ENCODE measurements at regions of chr6 and their contacts with region 1.

Region 1: DNA sequence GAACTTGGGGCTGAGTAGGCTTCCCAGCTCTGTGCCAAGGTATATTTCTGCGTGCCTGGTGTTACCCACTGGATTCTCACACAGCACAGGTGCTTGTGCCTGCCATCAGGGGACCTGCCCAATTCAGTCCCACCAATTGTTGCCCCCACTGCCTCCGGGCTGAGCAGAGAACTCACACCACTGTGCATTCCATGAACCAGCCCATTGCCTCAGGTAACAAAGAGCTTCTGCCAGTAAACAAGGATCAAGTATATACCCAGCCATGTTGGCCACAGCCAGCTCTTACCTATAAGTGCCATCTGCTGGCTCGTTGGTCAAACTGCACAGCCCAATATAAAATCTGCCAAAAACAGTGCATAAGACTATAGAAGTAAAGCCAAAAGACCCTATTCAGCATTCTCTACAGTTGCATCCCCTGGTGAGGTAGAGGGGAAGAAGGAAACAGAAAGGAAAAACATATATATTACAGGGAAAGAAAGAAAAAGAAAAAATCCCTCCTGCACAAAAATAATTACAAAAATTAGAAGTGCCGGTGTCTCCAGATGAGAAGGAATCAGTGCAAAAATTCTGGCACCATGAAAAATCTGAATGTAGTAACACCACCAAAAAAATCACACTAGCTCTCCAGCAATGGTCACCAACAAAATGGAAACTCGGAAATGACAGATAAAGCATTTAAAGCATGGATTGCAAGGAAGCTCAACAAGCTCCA is 241.4 kb downstream of the IBTK start:
- DNase-seq: peak; percentile 41
- H3K4me3 ChIP-seq: no peak overlapping the region
- H3K27ac ChIP-seq: no peak overlapping the region
- H3K4me1 ChIP-seq: no peaks in the 10 kb centered on the region
- H3K27me3 ChIP-seq: no peaks in the 10 kb centered on the region
- CTCF ChIP-seq: peak; percentile 66 to 83

Region 2: GRCh38 chr6:81734085-81734484 is 272.1 kb before region 1 on chr6:
- CTCF ChIA-PET with region 1: no interaction called
- dilution Hi-C with region 1: no loop called
- in situ Hi-C with region 1: no loop called
- intact Hi-C with region 1: loop called (anchors 1 kb)
- DNase-seq: no peak
- H3K4me3 ChIP-seq: no peak overlapping the region
- H3K27ac ChIP-seq: no peak overlapping the region
- H3K4me1 ChIP-seq: peaks cover 10% of the 10 kb centered on the region
- H3K27me3 ChIP-seq: no peaks in the 10 kb centered on the region
- CTCF ChIP-seq: peak in 1 of 2 donors; percentile 34

Region 3: DNA sequence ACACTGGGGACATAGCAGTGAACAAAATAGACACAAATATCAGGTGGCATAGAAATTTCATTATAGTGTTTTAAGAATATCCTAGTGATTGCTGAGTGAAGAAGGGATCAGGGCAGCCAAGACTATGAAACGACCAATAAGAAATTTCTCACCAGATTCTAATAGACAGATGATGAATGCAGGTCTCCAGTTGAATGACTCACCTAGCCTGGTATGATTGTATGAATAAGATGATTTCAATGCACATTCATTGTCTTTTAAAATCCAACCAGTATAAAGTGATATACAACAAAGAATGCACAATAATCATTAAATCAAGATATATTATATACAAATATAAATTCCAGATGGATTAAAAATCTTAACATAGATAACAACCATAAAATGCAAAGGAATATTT is 129.2 kb before region 1 on chr6:
- CTCF ChIA-PET with region 1: no interaction called
- dilution Hi-C with region 1: no loop called
- in situ Hi-C with region 1: no loop called
- intact Hi-C with region 1: no loop called
- DNase-seq: peak; percentile 20
- H3K4me3 ChIP-seq: no peak overlapping the region
- H3K27ac ChIP-seq: no peak overlapping the region
- H3K4me1 ChIP-seq: no peaks in the 10 kb centered on the region
- H3K27me3 ChIP-seq: no peaks in the 10 kb centered on the region
- CTCF ChIP-seq: no peak

Region 4: GRCh38 chr6:82040405-82041221 is 34.4 kb after region 1 on chr6:
- CTCF ChIA-PET with region 1: no interaction called
- dilution Hi-C with region 1: no loop called
- in situ Hi-C with region 1: no loop called
- intact Hi-C with region 1: loop called (anchors 2 kb)
- DNase-seq: peak; percentile 24
- H3K4me3 ChIP-seq: no peak overlapping the region
- H3K27ac ChIP-seq: no peak overlapping the region
- H3K4me1 ChIP-seq: no peaks in the 10 kb centered on the region
- H3K27me3 ChIP-seq: no peaks in the 10 kb centered on the region
- CTCF ChIP-seq: peak; percentile 82 to 87

Region 5: DNA sequence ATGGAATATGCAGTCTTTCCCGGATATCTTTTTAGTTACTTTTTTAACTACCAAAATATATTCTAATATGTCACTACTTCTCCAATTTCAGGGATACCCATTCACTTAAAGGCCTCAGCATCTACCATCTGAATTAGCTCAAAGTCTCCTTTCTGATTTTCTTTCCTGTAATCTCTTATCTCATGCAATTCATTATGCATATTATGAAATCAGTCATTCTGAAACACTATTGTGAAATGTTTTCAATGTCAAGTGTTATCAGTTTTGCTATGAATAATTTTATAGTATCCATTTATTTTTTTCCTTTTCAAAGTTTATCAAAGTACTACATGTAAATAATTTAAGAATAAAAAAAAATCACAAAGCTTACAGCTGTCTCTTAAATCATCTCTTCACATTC is 316.2 kb after region 1 on chr6:
- CTCF ChIA-PET with region 1: no interaction called
- dilution Hi-C with region 1: no loop called
- in situ Hi-C with region 1: no loop called
- intact Hi-C with region 1: no loop called
- DNase-seq: no peak
- H3K4me3 ChIP-seq: no peak overlapping the region
- H3K27ac ChIP-seq: no peak overlapping the region
- H3K4me1 ChIP-seq: no peaks in the 10 kb centered on the region
- H3K27me3 ChIP-seq: no peaks in the 10 kb centered on the region
- CTCF ChIP-seq: no peak

Measured in mammary epithelial cell (primary cell).